ENCODE measurements at regions of chr18 and their contacts with region 1.

Region 1: GRCh38 chr18:50429207-50429948 is 54.5 kb downstream of the SKA1 start:
- DNase-seq: no peak
- H3K4me3 Mint-ChIP-seq: no peak overlapping the region
- H3K27ac Mint-ChIP-seq: no peak overlapping the region
- H3K4me1 Mint-ChIP-seq: no peaks in the 10 kb centered on the region
- H3K27me3 Mint-ChIP-seq: peaks cover 28% of the 10 kb centered on the region

Region 2: DNA sequence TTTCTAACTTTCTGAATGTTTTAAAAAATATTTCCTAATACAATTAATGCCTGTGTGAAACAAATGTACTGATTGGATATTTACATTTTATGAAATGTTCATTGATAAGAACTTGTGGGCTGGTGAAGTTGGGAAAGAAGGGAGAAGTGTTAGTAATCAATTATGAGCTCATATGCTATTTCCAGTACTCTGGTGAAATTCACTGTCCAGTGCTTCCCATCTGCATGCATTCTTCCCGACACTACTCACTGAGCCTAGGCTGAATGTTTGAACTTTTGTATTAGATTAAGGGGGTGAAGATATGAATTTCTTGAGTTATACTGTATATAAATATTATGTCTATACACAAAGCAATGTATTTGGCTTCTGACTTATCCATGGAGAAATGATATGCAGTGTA is 18.5 kb before region 1 on chr18:
- CTCF ChIA-PET with region 1: interaction called, 10 read pairs
- POLR2A ChIA-PET with region 1: no interaction called
- DNase-seq: no peak
- H3K4me3 Mint-ChIP-seq: no peak overlapping the region
- H3K27ac Mint-ChIP-seq: no peak overlapping the region
- H3K4me1 Mint-ChIP-seq: no peaks in the 10 kb centered on the region
- H3K27me3 Mint-ChIP-seq: peaks cover 40% of the 10 kb centered on the region